ENCODE measurements at regions of chr1 and their contacts with region 1.

Region 1: DNA sequence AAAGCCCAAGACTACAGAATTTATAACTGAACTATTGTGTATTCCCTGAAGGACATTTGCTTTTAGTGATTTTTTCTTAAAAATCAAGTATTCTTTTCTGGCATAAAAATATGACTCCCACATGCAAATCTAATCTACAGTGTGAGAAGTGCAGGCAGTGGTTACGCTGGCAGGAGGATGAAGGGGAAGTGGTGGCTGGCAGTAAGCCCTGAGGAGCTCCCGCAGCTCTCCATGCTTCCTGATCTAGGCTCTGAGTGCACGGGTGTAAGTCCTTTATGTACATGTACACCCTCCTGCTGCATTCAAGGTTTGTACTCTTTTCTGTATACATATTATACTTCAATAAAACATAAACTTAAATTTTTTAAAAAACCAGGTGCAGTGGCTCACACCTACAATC is 67.5 kb upstream of the PRDX6 start:
- DNase-seq: no peak
- ATAC-seq: no peak
- H3K4me3 Mint-ChIP-seq: no peak overlapping the region
- H3K27ac Mint-ChIP-seq: no peak overlapping the region
- H3K4me1 Mint-ChIP-seq: peaks cover 40% of the 10 kb centered on the region
- H3K27me3 Mint-ChIP-seq: no peaks in the 10 kb centered on the region

Region 2: GRCh38 chr1:172818841-172819527 is 590.6 kb before region 1 on chr1:
- CTCF ChIA-PET with region 1: no interaction called
- POLR2A ChIA-PET with region 1: no interaction called
- intact Hi-C with region 1: loop called in 1 of 2 experiments (anchors 10 kb)
- DNase-seq: peak; percentile 70
- ATAC-seq: peak; percentile 96
- H3K4me3 Mint-ChIP-seq: peak overlapping the region; percentile 3
- H3K27ac Mint-ChIP-seq: peak overlapping the region; percentile 38
- H3K4me1 Mint-ChIP-seq: peaks cover 33% of the 10 kb centered on the region
- H3K27me3 Mint-ChIP-seq: peaks cover 15% of the 10 kb centered on the region

Region 3: DNA sequence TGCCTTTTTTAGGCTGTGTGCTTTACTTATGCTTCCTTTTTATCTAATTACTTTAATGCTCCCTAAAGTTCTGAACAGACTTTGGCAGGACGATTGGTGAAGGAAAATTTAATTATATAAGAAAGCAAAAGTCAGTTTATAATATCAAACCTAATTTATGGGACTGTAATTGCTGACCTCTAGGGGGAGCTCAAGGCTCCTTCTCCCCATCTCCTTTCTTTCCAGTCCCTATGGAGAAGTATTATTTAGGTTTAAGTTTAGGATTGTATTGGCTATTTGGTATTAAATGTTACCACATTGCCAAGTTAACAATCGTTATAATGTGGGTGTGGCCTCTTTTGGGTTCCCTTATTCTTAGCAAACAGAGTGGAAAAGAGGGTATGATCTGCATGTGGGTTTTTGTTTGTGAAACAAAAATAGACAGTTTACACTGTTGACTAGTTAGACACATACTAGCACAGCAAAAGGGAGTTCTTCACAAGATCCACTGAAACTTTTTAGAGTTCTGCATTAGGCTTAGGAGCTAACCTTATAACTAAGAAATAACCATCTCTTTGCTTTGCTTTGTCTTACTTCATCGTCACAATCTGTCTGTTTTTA is 154.3 kb before region 1 on chr1:
- CTCF ChIA-PET with region 1: no interaction called
- POLR2A ChIA-PET with region 1: no interaction called
- intact Hi-C with region 1: loop called (anchors 5 to 10 kb)
- DNase-seq: peak; percentile 22
- ATAC-seq: no peak
- H3K4me3 Mint-ChIP-seq: no peak overlapping the region
- H3K27ac Mint-ChIP-seq: no peak overlapping the region
- H3K4me1 Mint-ChIP-seq: no peaks in the 10 kb centered on the region
- H3K27me3 Mint-ChIP-seq: no peaks in the 10 kb centered on the region

Region 4: GRCh38 chr1:173702736-173703135 is 293.1 kb after region 1 on chr1:
- CTCF ChIA-PET with region 1: no interaction called
- POLR2A ChIA-PET with region 1: no interaction called
- intact Hi-C with region 1: no loop called
- DNase-seq: no peak
- ATAC-seq: no peak
- H3K4me3 Mint-ChIP-seq: no peak overlapping the region
- H3K27ac Mint-ChIP-seq: no peak overlapping the region
- H3K4me1 Mint-ChIP-seq: no peaks in the 10 kb centered on the region
- H3K27me3 Mint-ChIP-seq: peaks cover 17% of the 10 kb centered on the region

Measured in activated CD4-positive, alpha-beta T cell treated with anti-CD3 and anti-CD28 coated beads for 36 hours (primary cell).